Dorsolateral prefrontal cortex (tissue), 120 donors: ENCODE measurements at regions of chr1 and their contacts with region 1.

Region 1: DNA sequence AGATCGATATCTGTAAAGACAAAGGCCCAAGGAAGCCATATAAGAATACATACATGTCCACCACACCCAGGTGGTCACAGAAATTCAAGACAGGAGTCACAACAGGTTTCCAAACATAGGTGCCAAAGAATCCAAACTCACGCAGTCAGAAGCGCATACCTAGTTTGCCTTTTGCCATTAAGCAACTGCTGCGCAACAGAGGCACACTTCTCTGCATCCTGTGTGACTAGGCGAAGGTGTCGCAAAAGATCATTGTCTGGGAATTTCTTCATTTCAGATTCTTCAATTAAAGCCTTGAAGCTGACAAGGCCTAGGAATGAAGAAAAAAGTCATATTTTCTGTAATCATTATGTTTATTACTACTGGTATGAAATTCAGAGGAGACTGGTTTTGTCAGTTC is 32.2 kb upstream of the SYT2 start:
- DNase-seq: no peak
- H3K4me3 ChIP-seq: no peak overlapping the region
- H3K27ac ChIP-seq: no peak overlapping the region
- H3K27me3 ChIP-seq: no peaks in the 10 kb centered on the region
- CTCF ChIP-seq: no peak

Region 2: DNA sequence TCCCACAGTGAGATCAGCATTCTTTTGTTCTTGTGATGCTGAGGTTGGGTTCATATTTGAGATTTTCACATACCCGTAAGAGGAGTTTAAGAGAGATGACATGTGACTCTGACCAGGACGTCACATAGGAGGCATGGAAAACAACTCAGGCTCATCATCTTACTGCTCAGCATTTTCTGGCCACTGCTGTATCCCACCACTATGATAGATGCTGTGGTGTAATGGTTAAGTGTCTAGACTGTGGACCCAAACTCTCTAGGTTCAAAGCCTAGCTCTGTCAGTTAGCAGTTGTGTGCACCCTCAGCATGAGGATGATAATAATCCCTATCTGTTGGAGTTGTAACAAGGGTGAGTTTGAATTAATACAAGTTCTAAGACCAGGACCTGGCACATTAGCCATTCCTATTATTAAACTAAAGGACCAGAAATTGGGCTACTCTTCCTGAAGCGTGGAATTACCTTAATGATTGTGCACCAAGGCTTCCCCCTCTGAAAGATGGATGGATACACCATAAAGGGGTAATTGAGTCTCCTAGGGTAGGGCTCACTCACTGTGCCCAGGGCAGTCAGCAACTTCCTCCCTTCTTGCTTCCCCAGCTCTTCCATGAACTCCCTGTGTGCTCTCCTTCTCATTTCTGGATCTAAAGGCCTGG is 508.0 kb before region 1 on chr1:
- intact Hi-C with region 1: no loop called
- DNase-seq: no peak
- H3K4me3 ChIP-seq: no peak overlapping the region
- H3K27ac ChIP-seq: no peak overlapping the region
- H3K27me3 ChIP-seq: peaks cover 0 to 8% (median 0%) of the 10 kb centered on the region in 45 donors
- CTCF ChIP-seq: no peak

Region 3: DNA sequence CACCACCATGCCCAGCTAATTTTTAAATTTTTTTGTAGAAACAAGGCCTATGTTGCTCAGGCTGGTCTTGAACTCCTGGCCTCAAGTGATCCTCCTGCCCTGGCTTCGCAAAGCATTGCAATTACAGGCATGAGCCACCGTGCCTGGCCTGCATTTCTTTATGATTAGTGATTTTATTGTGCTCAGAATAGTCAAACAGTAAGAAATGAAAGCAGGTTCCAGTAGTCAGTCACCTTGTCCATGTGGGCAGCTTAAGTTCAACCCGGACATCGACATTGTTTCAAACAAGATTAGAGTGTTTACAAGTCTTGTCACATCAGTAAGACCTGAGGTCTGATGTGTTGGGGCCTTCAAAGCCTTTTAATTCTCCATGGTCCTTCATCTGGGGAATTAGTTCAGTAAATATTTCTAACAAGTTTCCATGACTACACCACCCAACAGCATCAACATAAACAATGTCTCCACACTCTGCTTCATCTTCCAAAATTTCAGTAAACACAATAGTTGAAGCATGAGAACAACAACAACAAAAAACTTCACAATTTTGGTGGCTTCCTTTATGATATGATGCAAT is 369.9 kb after region 1 on chr1:
- intact Hi-C with region 1: loop called in 1 of 2 experiments (anchors 5 kb)
- DNase-seq: no peak
- H3K4me3 ChIP-seq: no peak overlapping the region
- H3K27ac ChIP-seq: no peak overlapping the region
- H3K27me3 ChIP-seq: no peaks in the 10 kb centered on the region
- CTCF ChIP-seq: no peak